ENCODE measurements at regions of chr14 and their contacts with region 1.

Region 1: GRCh38 chr14:91418387-91419043 is 895 bp upstream of the CCDC88C start:
- DNase-seq: peak; percentile 64 to 75
- H3K4me3 ChIP-seq: peak overlapping the region; percentile 83; the same call in 1 of the 2 replicates
- H3K27ac ChIP-seq: peak overlapping the region; percentile 78
- H3K4me1 ChIP-seq: peaks cover 14% of the 10 kb centered on the region
- H3K27me3 ChIP-seq: no peaks in the 10 kb centered on the region
- CTCF ChIP-seq: peak; percentile 96

Region 2: DNA sequence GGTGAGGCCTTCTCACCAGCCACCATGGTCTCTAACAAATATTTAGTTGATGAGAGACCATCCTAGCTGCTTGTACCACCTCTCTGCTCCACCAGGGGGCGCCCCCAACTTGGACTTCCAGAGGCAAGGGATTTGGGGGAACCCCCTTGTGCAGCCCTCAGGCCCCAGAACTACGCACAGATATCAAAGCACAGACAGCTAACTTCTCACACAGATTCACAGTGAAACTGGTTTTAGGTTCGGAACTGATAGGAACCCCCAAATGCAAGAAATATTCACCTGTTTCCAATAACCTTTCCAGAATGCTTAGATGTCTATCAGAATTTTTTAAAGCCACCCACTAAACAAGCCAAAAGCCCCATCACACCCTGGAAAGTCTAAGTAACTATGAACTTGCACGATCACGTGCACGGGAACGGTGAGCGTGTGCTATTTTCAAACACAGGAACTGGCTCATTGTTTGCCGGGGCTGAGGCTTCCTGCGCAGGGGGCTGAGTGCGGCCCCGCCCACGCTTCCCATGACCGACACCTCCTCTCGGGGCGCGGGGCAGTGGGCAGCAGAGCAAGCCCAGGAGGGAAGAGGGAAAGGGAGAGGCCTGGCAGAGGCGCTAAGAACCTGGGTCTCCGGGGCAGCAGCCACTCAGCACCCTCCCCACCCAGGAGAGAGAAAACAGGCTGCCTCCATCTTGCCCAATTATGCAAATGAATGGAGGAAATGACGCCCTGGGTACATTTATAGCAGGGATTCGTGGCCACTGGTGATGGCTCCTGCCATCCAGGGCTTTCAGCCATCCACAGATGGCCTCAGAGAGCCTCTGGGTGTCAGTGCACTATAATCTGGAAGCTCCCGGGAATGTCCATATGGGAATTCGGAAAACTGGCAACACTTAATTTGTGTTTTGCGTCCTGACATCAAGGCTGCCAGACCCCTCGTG is 94.6 kb before region 1 on chr14:
- CTCF ChIA-PET with region 1: no interaction called
- POLR2A ChIA-PET with region 1: no interaction called
- intact Hi-C with region 1: loop called (anchors 1 kb)
- DNase-seq: peak in 1 of 2 experiments; percentile 38
- H3K4me3 ChIP-seq: no peak overlapping the region
- H3K27ac ChIP-seq: no peak overlapping the region
- H3K4me1 ChIP-seq: no peaks in the 10 kb centered on the region
- H3K27me3 ChIP-seq: no peaks in the 10 kb centered on the region
- CTCF ChIP-seq: peak; percentile 93

Region 3: GRCh38 chr14:91367173-91368171 is 51.0 kb before region 1 on chr14:
- CTCF ChIA-PET with region 1: interaction called, 3 read pairs
- POLR2A ChIA-PET with region 1: no interaction called
- intact Hi-C with region 1: loop called (anchors 5 kb)
- DNase-seq: peak; percentile 67 to 96
- H3K4me3 ChIP-seq: peak overlapping the region; percentile 41; the same call in 1 of the 2 replicates
- H3K27ac ChIP-seq: peak overlapping the region; percentile 84
- H3K4me1 ChIP-seq: peaks cover 30% of the 10 kb centered on the region
- H3K27me3 ChIP-seq: no peaks in the 10 kb centered on the region
- CTCF ChIP-seq: no peak

Measured in PC-9 (cell line).